ENCODE measurements at regions of chr18 and their contacts with region 1.

Region 1: DNA sequence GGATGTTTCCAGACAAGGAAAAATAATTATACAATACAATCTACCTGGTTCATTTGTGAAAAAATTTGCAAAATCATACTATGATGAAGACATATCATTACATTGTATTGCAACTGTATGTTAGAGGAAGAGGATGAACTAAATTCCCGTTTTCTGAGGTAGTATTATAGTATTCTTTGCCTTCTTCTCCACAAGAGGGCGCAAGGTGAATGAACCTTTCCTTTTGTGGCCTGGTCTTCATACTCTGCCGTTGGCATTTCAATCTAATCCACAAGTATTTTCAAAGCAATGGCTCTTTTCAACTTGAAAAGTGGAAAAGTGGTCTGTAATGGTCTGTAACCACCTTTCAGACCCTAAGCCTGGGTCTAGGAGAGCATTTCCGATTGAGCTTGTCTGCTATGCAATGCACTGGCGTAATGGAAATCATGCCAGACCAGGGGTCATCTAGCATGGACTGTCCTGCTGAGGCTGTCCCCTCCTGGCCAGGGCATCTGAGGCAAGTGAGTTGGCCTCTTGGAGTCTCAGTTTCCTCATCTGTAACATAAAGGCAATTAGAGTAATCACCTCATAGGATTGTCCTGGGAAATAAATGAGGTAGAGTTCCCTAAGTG is 30.8 kb upstream of the ZNF396 start:
- DNase-seq: peak in 1 of 2 experiments; percentile 48
- H3K4me3 ChIP-seq: no peak overlapping the region
- H3K4me3 Mint-ChIP-seq: no peak overlapping the region
- H3K27ac Mint-ChIP-seq: no peak overlapping the region
- H3K4me1 ChIP-seq: no peaks in the 10 kb centered on the region; the same call in 1 of the 2 replicates
- H3K4me1 Mint-ChIP-seq: peaks cover 8% of the 10 kb centered on the region
- H3K27me3 ChIP-seq: no peaks in the 10 kb centered on the region
- H3K27me3 Mint-ChIP-seq: no peaks in the 10 kb centered on the region
- CTCF ChIP-seq: peak; percentile 25 to 51

Region 2: GRCh38 chr18:35459005-35459441 is 51.0 kb after region 1 on chr18:
- CTCF ChIA-PET with region 1: no interaction called
- POLR2A ChIA-PET with region 1: no interaction called
- intact Hi-C with region 1: loop called (anchors 10 kb)
- DNase-seq: peak; percentile 77 to 88
- H3K4me3 ChIP-seq: no peak overlapping the region
- H3K4me3 Mint-ChIP-seq: peak overlapping the region; percentile 29
- H3K27ac Mint-ChIP-seq: peak overlapping the region; percentile 75
- H3K4me1 ChIP-seq: peaks cover 25% of the 10 kb centered on the region
- H3K4me1 Mint-ChIP-seq: peaks cover 20% of the 10 kb centered on the region
- H3K27me3 ChIP-seq: no peaks in the 10 kb centered on the region
- H3K27me3 Mint-ChIP-seq: no peaks in the 10 kb centered on the region
- CTCF ChIP-seq: no peak

Region 3: DNA sequence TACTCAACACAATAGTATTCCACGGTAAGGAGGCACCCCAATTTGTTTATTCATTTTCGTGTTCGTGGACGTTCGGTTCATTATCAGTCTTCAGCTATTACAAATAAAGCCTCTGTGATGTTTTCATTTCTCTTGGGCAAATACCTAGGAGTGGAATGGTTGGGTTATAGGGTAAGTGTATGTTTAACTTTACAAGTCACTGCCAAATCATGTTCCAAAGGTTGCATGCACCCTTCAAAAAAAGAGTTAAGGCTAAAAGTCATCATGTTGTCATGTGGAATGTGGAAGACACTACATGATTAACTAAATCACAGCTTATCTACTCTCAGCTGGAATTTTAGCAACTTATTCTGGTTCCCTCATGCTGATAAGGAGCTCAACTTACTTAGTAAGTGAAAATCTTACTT is 74.0 kb after region 1 on chr18:
- CTCF ChIA-PET with region 1: no interaction called
- POLR2A ChIA-PET with region 1: no interaction called
- intact Hi-C with region 1: loop called (anchors 1 kb)
- DNase-seq: peak in 1 of 2 experiments; percentile 39
- H3K4me3 ChIP-seq: no peak overlapping the region
- H3K4me3 Mint-ChIP-seq: peak overlapping the region; percentile 30
- H3K27ac Mint-ChIP-seq: peak overlapping the region; percentile 89
- H3K4me1 ChIP-seq: peaks cover 44% of the 10 kb centered on the region
- H3K4me1 Mint-ChIP-seq: peaks cover 14% of the 10 kb centered on the region
- H3K27me3 ChIP-seq: no peaks in the 10 kb centered on the region
- H3K27me3 Mint-ChIP-seq: no peaks in the 10 kb centered on the region
- CTCF ChIP-seq: no peak

Region 4: DNA sequence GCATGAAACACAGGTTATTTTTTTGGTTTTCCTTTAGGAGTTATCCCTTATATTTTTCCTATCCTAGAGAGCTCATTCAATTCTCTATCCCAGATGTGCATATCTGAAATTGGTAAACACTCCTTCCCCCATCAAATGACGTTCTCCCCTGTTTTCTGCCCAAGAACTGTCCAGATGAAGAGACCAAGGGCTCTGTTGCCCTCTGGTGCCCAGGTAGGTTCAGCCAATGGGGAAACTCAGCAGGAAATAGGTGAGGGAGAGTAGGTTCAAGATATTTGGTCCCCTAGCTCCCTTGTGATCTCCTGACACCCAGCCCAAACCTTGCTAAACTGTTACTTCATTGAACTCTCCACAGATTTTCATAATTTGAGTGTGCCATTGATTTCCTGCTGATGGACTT is 103.9 kb after region 1 on chr18:
- CTCF ChIA-PET with region 1: no interaction called
- POLR2A ChIA-PET with region 1: no interaction called
- intact Hi-C with region 1: loop called (anchors 1 kb)
- DNase-seq: no peak
- H3K4me3 ChIP-seq: no peak overlapping the region
- H3K4me3 Mint-ChIP-seq: no peak overlapping the region
- H3K27ac Mint-ChIP-seq: no peak overlapping the region
- H3K4me1 ChIP-seq: peaks cover 19% of the 10 kb centered on the region
- H3K4me1 Mint-ChIP-seq: no peaks in the 10 kb centered on the region
- H3K27me3 ChIP-seq: no peaks in the 10 kb centered on the region
- H3K27me3 Mint-ChIP-seq: no peaks in the 10 kb centered on the region
- CTCF ChIP-seq: peak in 1 of 2 experiments; percentile 9

Region 5: DNA sequence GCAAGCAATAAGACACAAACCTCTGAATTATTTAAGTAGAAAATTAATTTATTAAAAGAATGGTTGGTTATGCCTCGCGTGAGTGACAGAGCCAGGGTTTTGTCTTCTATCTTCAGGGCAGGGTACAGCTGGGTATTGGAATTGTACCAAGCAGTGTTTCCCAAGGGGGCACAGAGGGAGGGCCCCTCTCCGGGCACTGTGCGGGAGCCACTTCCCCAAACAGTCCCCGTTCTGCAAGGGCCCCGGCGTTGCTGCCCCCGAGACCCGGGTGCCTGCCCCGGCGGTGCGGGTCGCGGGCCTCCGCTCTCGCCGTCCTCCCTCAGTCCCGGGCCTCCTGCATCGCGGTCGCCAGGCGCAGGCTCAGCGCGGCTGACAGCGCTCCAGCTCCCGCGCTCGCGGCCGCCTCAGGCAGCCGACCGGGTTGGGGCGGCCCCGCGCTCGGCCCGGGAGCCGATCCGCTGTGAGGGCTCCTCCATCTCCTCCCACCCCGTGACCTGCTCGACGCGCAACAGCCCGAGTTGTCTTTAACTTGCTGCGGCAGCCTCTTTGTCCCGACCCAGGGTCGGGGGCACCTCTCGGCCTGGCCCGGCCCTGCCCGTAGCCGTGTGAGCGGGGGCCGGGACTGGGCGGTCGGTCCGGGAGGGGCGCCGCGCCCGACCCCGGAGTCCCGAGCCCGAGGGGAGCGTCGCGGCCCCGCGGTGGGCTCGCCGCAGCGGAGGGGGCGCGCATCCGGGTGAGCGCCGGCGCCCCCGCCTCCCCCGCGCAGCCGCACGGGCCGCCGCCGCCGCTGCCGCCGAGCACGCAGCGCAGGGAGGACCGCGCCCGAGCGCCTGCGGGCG is 172.9 kb after region 1 on chr18:
- CTCF ChIA-PET with region 1: no interaction called
- POLR2A ChIA-PET with region 1: no interaction called
- intact Hi-C with region 1: loop called (anchors 2 kb)
- DNase-seq: peak; percentile 39 to 44
- H3K4me3 ChIP-seq: peak overlapping the region; percentile 58
- H3K4me3 Mint-ChIP-seq: peak overlapping the region; percentile 68
- H3K27ac Mint-ChIP-seq: no peak overlapping the region
- H3K4me1 ChIP-seq: peaks cover 4% of the 10 kb centered on the region
- H3K4me1 Mint-ChIP-seq: no peaks in the 10 kb centered on the region
- H3K27me3 ChIP-seq: no peaks in the 10 kb centered on the region
- H3K27me3 Mint-ChIP-seq: no peaks in the 10 kb centered on the region
- CTCF ChIP-seq: no peak

Measured in Caco-2 (cell line).